Activated B cell treated with CpG ODN at 0.5 μM for 24 hours (primary cell): ENCODE measurements at regions of chr1 and their contacts with region 1.

Region 1: DNA sequence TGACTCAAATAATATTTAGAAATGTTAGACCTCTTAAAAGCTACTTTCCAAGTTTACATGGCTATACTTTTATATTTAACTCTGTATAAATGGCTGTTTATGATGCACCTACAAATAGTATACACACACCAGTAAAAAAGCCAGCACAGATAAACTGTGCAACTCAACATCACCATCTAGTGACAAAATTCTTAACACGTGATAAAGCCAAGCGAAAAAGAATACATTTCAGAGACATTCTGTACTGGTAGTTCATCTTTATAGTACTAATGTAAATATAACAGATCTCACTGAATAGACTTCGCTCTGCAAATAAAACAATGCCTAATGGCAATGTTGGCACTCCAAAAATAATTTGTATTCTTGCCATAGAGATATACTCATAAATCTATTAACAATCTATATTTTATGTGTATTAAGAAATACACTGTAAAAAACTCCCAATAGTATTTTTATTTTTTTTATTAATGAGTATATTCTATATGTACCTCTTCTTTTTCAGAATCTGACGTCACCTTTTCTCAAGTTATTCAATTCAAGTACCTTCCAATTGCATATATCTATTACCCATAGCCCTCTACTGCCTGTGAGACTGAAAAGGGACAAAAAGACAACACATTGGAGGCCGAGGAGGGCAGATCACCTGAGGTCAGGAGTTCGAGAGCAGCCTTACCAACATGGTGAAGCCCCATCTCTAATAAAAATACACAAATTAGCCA is 100.2 kb downstream of the DPYD start:
- DNase-seq: no peak
- ATAC-seq: no peak
- H3K4me3 Mint-ChIP-seq: no peak overlapping the region
- H3K27ac Mint-ChIP-seq: no peak overlapping the region
- H3K4me1 Mint-ChIP-seq: no peaks in the 10 kb centered on the region
- H3K27me3 Mint-ChIP-seq: no peaks in the 10 kb centered on the region
- CTCF ChIP-seq: no peak

Region 2: GRCh38 chr1:96966536-96967138 is 854.0 kb before region 1 on chr1:
- CTCF ChIA-PET with region 1: interaction called, 3 read pairs
- POLR2A ChIA-PET with region 1: no interaction called
- intact Hi-C with region 1: loop called (anchors 1 kb)
- DNase-seq: peak; percentile 44
- ATAC-seq: peak; percentile 52
- H3K4me3 Mint-ChIP-seq: no peak overlapping the region
- H3K27ac Mint-ChIP-seq: no peak overlapping the region
- H3K4me1 Mint-ChIP-seq: no peaks in the 10 kb centered on the region
- H3K27me3 Mint-ChIP-seq: peaks cover 5% of the 10 kb centered on the region
- CTCF ChIP-seq: peak; percentile 52

Region 3: DNA sequence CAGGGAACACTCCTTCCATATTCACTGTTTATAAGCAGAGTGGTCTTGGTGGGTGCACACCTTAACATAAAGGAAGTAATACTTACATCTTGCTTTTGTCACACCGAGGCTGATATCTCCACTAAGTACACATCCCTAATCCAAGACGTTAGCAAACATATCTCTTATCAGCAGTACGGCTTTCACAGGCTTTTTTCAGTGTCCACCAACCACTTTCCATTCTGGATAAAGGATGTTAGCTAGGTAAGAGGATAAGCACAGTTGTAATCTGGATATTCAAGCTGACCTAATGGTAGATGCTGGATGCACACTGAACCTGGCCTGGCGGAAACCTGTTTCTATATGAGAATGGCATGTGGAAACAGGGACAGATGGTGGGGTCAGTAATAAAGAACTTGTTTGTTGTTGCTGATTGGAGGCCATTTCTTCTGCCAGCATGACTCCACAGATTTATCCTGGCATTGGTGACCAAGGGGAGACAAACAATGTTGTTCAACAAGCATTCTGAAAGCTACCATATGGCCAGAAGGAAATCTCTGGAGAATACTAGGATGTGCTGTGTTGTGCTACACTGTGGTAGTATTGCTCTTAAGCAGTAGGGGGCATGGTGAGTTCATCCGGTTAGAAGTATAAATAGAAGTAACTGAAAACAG is 682.6 kb before region 1 on chr1:
- CTCF ChIA-PET with region 1: no interaction called
- POLR2A ChIA-PET with region 1: no interaction called
- intact Hi-C with region 1: loop called (anchors 1 kb)
- DNase-seq: no peak
- ATAC-seq: peak; percentile 79
- H3K4me3 Mint-ChIP-seq: peak overlapping the region; percentile 42
- H3K27ac Mint-ChIP-seq: no peak overlapping the region
- H3K4me1 Mint-ChIP-seq: peaks cover 8% of the 10 kb centered on the region
- H3K27me3 Mint-ChIP-seq: no peaks in the 10 kb centered on the region
- CTCF ChIP-seq: no peak

Region 4: GRCh38 chr1:97243973-97244560 is 576.6 kb before region 1 on chr1:
- CTCF ChIA-PET with region 1: no interaction called
- POLR2A ChIA-PET with region 1: no interaction called
- intact Hi-C with region 1: loop called (anchors 5 kb)
- DNase-seq: no peak
- ATAC-seq: no peak
- H3K4me3 Mint-ChIP-seq: no peak overlapping the region
- H3K27ac Mint-ChIP-seq: no peak overlapping the region
- H3K4me1 Mint-ChIP-seq: no peaks in the 10 kb centered on the region
- H3K27me3 Mint-ChIP-seq: no peaks in the 10 kb centered on the region
- CTCF ChIP-seq: no peak

Region 5: GRCh38 chr1:97654876-97655585 is 165.6 kb before region 1 on chr1:
- CTCF ChIA-PET with region 1: no interaction called
- POLR2A ChIA-PET with region 1: no interaction called
- intact Hi-C with region 1: no loop called
- DNase-seq: no peak
- ATAC-seq: no peak
- H3K4me3 Mint-ChIP-seq: no peak overlapping the region
- H3K27ac Mint-ChIP-seq: no peak overlapping the region
- H3K4me1 Mint-ChIP-seq: no peaks in the 10 kb centered on the region
- H3K27me3 Mint-ChIP-seq: no peaks in the 10 kb centered on the region
- CTCF ChIP-seq: no peak

Region 6: GRCh38 chr1:97668945-97669344 is 151.7 kb before region 1 on chr1:
- CTCF ChIA-PET with region 1: no interaction called
- POLR2A ChIA-PET with region 1: no interaction called
- intact Hi-C with region 1: loop called (anchors 1 kb)
- DNase-seq: no peak
- ATAC-seq: no peak
- H3K4me3 Mint-ChIP-seq: no peak overlapping the region
- H3K27ac Mint-ChIP-seq: no peak overlapping the region
- H3K4me1 Mint-ChIP-seq: no peaks in the 10 kb centered on the region
- H3K27me3 Mint-ChIP-seq: no peaks in the 10 kb centered on the region
- CTCF ChIP-seq: no peak

Region 7: DNA sequence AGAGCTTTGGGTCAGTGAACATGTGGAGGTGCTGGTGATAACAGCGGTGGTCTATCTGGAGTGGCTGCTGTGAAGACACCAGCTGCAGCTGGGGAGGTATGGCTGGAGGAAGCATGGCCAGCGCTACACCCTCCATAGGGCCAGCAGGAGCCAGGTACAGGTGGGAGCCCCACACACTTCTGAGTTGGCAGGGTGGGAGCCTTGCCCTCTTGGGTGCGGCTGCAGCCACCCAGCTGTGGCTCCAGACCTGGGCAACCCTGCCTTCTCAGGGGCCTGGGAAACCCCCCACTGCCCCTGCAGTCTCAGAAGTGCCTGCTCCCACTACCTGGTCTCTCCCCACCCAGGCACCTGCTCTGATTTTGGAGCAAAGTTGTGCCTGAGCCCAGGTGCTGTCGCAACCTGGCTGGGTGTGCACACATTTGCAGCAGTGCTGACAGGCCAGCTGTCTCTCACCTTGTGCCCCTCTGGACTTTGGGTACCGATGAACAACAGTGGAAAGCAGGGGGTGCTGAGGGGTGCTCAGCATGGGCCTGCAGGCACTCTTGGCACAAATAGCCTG is 24.0 kb after region 1 on chr1:
- CTCF ChIA-PET with region 1: no interaction called
- POLR2A ChIA-PET with region 1: no interaction called
- intact Hi-C with region 1: no loop called
- DNase-seq: no peak
- ATAC-seq: no peak
- H3K4me3 Mint-ChIP-seq: no peak overlapping the region
- H3K27ac Mint-ChIP-seq: no peak overlapping the region
- H3K4me1 Mint-ChIP-seq: peaks cover 17% of the 10 kb centered on the region
- H3K27me3 Mint-ChIP-seq: no peaks in the 10 kb centered on the region
- CTCF ChIP-seq: no peak

Region 8: GRCh38 chr1:97925151-97925550 is 104.5 kb after region 1 on chr1:
- CTCF ChIA-PET with region 1: no interaction called
- POLR2A ChIA-PET with region 1: no interaction called
- intact Hi-C with region 1: no loop called
- DNase-seq: no peak
- ATAC-seq: no peak
- H3K4me3 Mint-ChIP-seq: no peak overlapping the region
- H3K27ac Mint-ChIP-seq: no peak overlapping the region
- H3K4me1 Mint-ChIP-seq: peaks cover 9% of the 10 kb centered on the region
- H3K27me3 Mint-ChIP-seq: no peaks in the 10 kb centered on the region
- CTCF ChIP-seq: no peak